ENCODE measurements at regions of chr11 and their contacts with region 1.

Region 1: DNA sequence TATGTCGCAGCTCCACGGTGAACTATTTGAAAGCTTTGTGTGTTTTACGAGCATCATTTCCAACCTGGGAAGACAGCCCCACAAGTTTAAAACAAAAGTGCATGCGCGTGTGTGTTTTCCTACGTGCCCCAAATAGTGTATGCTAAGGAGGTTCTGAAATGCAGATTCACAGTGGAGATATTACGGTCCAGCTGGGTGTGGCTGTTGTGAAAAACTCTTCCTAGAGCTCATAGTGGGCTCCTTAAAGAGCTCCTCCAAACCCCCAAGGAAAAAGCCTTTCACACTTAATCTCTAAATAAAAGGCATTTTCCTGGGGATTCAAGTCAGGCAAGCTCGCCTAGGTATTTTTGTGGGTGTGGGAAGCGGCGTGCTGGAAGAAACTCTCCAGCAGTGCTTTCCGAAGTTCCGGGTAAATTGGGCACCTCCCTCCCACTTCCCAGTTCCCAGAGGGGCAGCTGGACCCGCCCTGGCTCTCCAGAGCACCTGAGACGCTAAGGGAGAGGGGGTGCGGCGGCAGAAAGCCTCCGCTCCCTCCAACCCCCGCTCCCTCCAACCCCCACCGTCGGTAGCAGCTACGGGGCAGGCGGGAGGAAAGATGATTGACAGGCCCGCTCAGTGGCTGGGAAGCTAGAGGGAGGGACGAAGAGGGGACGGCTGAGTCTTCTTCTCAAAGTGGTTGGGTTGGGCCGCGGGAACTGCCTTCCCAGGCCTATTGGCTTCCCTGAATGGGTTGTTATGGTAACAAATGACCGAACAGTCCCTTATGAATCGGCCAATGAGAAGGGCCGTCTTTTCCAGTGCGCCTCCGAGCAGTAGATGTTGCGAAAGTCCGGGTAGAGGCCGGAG is 558 bp upstream of the PCF11 start:
- DNase-seq: peak; percentile 100
- H3K4me3 ChIP-seq: peak overlapping the region; percentile 54 to 72 (median 63)
- H3K27ac ChIP-seq: peak overlapping the region; percentile 85 to 99 (median 96)
- H3K4me1 ChIP-seq: peaks cover 0 to 30% (median 20%) of the 10 kb centered on the region in 4 donors
- H3K27me3 ChIP-seq: no peaks in the 10 kb centered on the region
- CTCF ChIP-seq: no peak
- EP300 ChIP-seq: no peak
- POLR2A ChIP-seq: peak; percentile 85 to 93

Region 2: GRCh38 chr11:82900277-82901164 is 255.9 kb before region 1 on chr11 and contains the start of gene PRCP:
- intact Hi-C with region 1: loop called (anchors 2 kb)
- DNase-seq: peak; percentile 97
- H3K4me3 ChIP-seq: peak within 1 kb of the TSS; percentile 57 to 70 (median 60)
- H3K27ac ChIP-seq: peak within 1 kb of the TSS; percentile 87 to 96 (median 94)
- H3K4me1 ChIP-seq: peaks cover 0 to 31% (median 26%) of the 10 kb centered on the region in 4 donors
- H3K27me3 ChIP-seq: no peaks in the 10 kb centered on the region
- CTCF ChIP-seq: no peak
- EP300 ChIP-seq: peak in 3 of 4 donors; percentile 41 to 59 (median 42)
- POLR2A ChIP-seq: peak; percentile 66 to 69
- total RNA-seq, gene PRCP: 27.4 to 40.2 (median 35.5) TPM

Region 3: GRCh38 chr11:82989628-82990404 is 166.6 kb before region 1 on chr11:
- intact Hi-C with region 1: loop called (anchors 5 kb)
- DNase-seq: no peak
- H3K4me3 ChIP-seq: no peak overlapping the region
- H3K27ac ChIP-seq: no peak overlapping the region
- H3K4me1 ChIP-seq: peaks cover 0 to 39% (median 36%) of the 10 kb centered on the region in 4 donors
- H3K27me3 ChIP-seq: no peaks in the 10 kb centered on the region
- CTCF ChIP-seq: no peak
- EP300 ChIP-seq: no peak
- POLR2A ChIP-seq: no peak

Region 4: GRCh38 chr11:83033972-83034672 is 122.3 kb before region 1 on chr11:
- intact Hi-C with region 1: loop called (anchors 1 kb)
- DNase-seq: peak; percentile 71
- H3K4me3 ChIP-seq: peak overlapping the region; percentile 31 to 42 (median 40)
- H3K27ac ChIP-seq: peak overlapping the region; percentile 83 to 86 (median 85)
- H3K4me1 ChIP-seq: peaks cover 0 to 63% (median 50%) of the 10 kb centered on the region in 4 donors
- H3K27me3 ChIP-seq: no peaks in the 10 kb centered on the region
- CTCF ChIP-seq: no peak
- EP300 ChIP-seq: no peak
- POLR2A ChIP-seq: no peak

Region 5: GRCh38 chr11:83193315-83194280 is 37.2 kb after region 1 on chr11 and contains the start of gene ANKRD42:
- intact Hi-C with region 1: loop called (anchors 1 kb)
- DNase-seq: peak; percentile 97
- H3K4me3 ChIP-seq: peak within 1 kb of the TSS; percentile 73 to 81 (median 74)
- H3K27ac ChIP-seq: peak within 1 kb of the TSS; percentile 87 to 94 (median 90)
- H3K4me1 ChIP-seq: peaks cover 0 to 43% (median 37%) of the 10 kb centered on the region in 4 donors
- H3K27me3 ChIP-seq: no peaks in the 10 kb centered on the region
- CTCF ChIP-seq: peak in 1 of 4 experiments; percentile 25
- EP300 ChIP-seq: peak in 2 of 4 donors; percentile 1 to 23
- POLR2A ChIP-seq: peak; percentile 62 to 85
- total RNA-seq, gene ANKRD42: 9.6 to 12.2 (median 11.0) TPM

Region 6: GRCh38 chr11:83285771-83286528 is 129.6 kb after region 1 on chr11 and contains the start of gene CCDC90B:
- intact Hi-C with region 1: loop called (anchors 5 kb)
- DNase-seq: peak; percentile 98
- H3K4me3 ChIP-seq: peak within 1 kb of the TSS; percentile 57 to 80 (median 72)
- H3K27ac ChIP-seq: peak within 1 kb of the TSS; percentile 95 to 97 (median 96)
- H3K4me1 ChIP-seq: peaks cover 0 to 46% (median 40%) of the 10 kb centered on the region in 4 donors
- H3K27me3 ChIP-seq: no peaks in the 10 kb centered on the region
- CTCF ChIP-seq: no peak
- EP300 ChIP-seq: no peak
- POLR2A ChIP-seq: peak; percentile 67 to 73
- total RNA-seq, gene CCDC90B: 28.9 to 49.2 (median 42.6) TPM

Measured in sigmoid colon (tissue), 7 donors.